ENCODE measurements at regions of chr6 and their contacts with region 1.

Region 1: GRCh38 chr6:153231048-153231646 is 100.1 kb upstream of the RGS17 start:
- DNase-seq: peak; percentile 54
- H3K4me3 Mint-ChIP-seq: no peak overlapping the region
- H3K27ac Mint-ChIP-seq: no peak overlapping the region
- H3K4me1 Mint-ChIP-seq: no peaks in the 10 kb centered on the region
- H3K27me3 Mint-ChIP-seq: no peaks in the 10 kb centered on the region

Region 2: DNA sequence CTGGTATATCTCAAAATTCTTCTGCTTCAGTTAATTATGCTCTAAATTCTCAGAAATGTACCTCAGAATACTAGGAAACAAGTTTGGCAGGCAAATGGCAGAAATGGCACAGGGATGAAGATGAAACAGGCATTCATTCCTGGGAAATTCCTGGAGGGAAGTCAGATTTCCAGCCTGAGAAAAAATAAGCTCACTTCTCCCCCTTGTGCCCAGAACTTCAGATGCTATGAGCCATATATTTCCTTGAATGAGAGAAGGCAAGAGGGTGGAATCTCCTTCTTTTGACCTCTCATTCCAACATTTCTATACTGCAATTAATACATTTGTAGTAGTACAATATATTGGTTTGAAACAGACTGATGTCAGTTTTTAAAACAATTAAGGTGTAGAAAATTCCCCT is 122.8 kb before region 1 on chr6:
- CTCF ChIA-PET with region 1: no interaction called
- DNase-seq: no peak
- H3K4me3 Mint-ChIP-seq: no peak overlapping the region
- H3K27ac Mint-ChIP-seq: no peak overlapping the region
- H3K4me1 Mint-ChIP-seq: no peaks in the 10 kb centered on the region
- H3K27me3 Mint-ChIP-seq: no peaks in the 10 kb centered on the region

Region 3: GRCh38 chr6:153218184-153218792 is 12.9 kb before region 1 on chr6:
- CTCF ChIA-PET with region 1: no interaction called
- DNase-seq: no peak
- H3K4me3 Mint-ChIP-seq: no peak overlapping the region
- H3K27ac Mint-ChIP-seq: no peak overlapping the region
- H3K4me1 Mint-ChIP-seq: no peaks in the 10 kb centered on the region
- H3K27me3 Mint-ChIP-seq: peaks cover 8% of the 10 kb centered on the region

Region 4: DNA sequence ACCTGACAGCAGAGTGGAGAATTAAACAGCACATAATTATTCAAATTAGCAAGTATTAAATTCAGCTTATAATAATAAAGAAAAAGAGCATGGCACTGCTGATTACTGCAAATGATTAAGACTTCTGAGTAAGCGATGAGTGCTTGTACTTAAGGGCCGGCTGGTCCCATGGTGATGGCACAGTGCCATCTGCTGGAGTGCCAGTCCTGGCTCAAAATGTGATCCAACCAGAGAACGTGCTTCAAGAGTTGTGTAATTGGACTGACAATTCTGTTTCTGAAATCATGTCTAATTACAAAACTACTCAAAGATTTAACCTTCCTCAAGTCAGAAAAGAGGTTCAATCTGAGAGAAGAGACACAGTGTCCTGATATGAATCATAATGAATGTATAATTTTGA is 81.5 kb after region 1 on chr6:
- CTCF ChIA-PET with region 1: interaction called, 16 read pairs
- DNase-seq: peak; percentile 49
- H3K4me3 Mint-ChIP-seq: no peak overlapping the region
- H3K27ac Mint-ChIP-seq: no peak overlapping the region
- H3K4me1 Mint-ChIP-seq: peaks cover 13% of the 10 kb centered on the region
- H3K27me3 Mint-ChIP-seq: no peaks in the 10 kb centered on the region

Measured in activated naive CD4-positive, alpha-beta T cell treated with anti-CD3 and anti-CD28 coated beads, Interleukin-2, amount 10 ng/mL, durations not matched to agents 7 days and 5 days (primary cell).